Left ventricle myocardium inferior (tissue), 1 donor: ENCODE measurements at regions of chr15 and their contacts with region 1.

Region 1: GRCh38 chr15:89874926-89875564 is 18.7 kb downstream of the AP3S2 start:
- DNase-seq: peak; percentile 80
- H3K4me3 ChIP-seq: no peak overlapping the region
- H3K27ac ChIP-seq: no peak overlapping the region
- H3K4me1 ChIP-seq: peaks cover 9% of the 10 kb centered on the region
- H3K27me3 ChIP-seq: no peaks in the 10 kb centered on the region
- CTCF ChIP-seq: peak; percentile 95

Region 2: GRCh38 chr15:89760303-89761008 is 114.6 kb before region 1 on chr15:
- intact Hi-C with region 1: loop called (anchors 5 kb)
- DNase-seq: peak; percentile 81
- H3K4me3 ChIP-seq: no peak overlapping the region
- H3K27ac ChIP-seq: no peak overlapping the region
- H3K4me1 ChIP-seq: no peaks in the 10 kb centered on the region
- H3K27me3 ChIP-seq: no peaks in the 10 kb centered on the region
- CTCF ChIP-seq: peak; percentile 95